Left cardiac atrium (tissue), 4 donors: ENCODE measurements at regions of chr12 and their contacts with region 1.

Region 1: DNA sequence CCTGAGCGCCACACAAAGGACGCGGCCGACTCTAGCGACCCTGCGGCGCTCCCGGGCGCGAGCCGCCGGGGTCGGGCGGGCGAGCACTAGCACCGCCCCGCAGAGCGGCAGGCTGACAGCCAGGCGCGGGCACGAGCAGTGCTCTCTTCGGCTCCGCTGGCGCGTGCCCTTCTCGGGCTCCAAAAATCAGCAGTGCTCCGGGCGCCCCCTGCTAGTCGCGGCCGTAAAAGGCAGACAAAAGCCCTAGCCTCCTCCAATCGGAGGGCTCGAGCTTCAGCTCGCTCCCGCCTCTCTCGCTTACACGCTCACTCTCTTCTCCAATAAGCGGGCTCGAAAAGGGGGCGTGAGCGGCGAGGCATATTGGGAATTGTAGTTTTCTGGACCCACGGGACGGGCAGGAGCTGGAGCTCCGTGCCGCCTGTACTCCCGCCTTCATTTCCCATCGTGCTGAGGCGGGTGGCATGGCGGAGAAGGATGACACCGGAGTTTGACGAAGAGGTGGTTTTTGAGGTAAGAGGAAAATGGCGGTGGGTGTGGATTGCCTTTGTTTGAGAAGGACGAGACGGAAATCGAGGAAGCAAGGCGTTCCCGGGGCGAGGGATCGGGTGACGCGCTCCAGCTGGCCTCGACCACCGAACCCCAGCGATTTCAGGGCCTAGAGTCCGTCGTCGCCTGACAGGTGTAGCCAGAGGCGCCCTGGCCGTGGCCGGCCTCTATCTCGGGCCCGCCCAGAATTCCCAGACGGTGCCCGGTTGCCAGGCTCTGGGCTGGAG is at the starts of genes FGD6 and VEZT:
- DNase-seq: peak; percentile 99
- ATAC-seq: peak; percentile 95 to 97
- total RNA-seq, gene FGD6: 16.2 to 16.3 TPM
- total RNA-seq, gene VEZT: 53.2 to 60.0 TPM

Region 2: GRCh38 chr12:95124106-95124505 is 93.5 kb before region 1 on chr12:
- intact Hi-C with region 1: loop called (anchors 5 to 10 kb)
- DNase-seq: no peak
- ATAC-seq: no peak

Region 3: DNA sequence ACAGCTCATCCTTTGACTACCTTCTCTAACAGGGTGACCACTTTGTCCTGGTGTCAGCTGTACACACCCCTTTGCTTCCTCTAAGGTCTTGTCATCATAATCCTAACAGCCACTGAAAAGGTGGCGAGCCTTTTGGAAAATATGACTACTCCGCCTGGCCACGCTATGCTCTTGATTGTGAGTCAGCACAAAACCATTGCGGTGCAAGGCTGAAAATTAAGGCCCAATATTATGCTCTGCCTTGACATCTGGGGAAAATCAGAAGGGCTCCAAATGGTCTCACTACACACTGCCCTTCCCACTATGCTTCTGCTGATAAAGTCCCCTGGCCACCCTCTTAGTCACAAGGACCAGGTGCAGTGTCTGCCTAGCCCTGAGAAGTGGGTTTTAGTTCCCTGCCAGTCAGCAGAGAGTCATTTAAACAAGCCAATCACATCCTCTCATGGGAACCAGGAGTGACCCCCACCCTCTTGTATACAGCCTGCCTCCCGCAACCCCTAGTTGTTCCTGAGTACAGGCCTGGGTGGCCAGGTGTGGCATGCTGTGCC is 34.6 kb before region 1 on chr12:
- intact Hi-C with region 1: no loop called
- DNase-seq: no peak
- ATAC-seq: peak in 1 of 2 donors; percentile 38